Activated T-helper 1 cell treated with anti-CD3 and anti-CD28 coated beads, Interleukin-12 subunit alpha, Interleukin-12 subunit beta, Interleukin-2, Interleukin-4 antibody, amounts not matched to agents 30 ng/mL and 10 ng/mL and 1 ng/mL, durations not matched to agents 14 hours and 24 hours and 36 hours (primary cell): ENCODE measurements at regions of chr2 and their contacts with region 1.

Region 1: DNA sequence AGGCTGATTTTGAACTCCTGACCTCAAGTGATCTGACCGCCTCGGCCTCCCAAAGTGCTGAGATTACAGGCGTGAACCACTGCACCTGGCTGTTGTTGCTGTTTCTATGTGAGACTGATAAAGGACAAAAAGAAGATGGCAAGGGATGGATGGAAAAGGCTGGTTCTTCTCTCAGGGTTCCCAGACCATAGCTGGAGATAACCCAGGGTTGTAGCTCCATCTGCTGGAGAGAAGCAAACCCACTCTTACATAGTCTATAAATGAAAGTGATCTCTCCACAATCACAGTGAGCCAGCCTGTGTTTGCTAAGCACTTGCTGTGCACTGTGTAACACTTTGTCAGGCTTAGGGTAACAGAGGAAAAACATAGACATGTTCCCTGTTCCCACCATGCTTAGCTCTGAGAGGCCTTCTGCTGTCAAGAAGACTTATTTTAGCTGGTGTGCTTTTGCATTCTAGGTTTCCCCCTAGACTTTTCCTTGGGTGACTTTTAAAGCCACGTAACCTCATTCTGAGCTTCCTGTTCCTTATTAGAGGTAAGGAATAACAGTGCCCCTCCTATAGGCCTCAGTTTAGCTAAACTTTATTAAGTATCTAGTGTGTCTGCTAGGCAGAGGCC is 49.7 kb downstream of the LIMS1 start:
- DNase-seq: peak; percentile 28
- H3K4me3 Mint-ChIP-seq: no peak overlapping the region
- H3K27ac Mint-ChIP-seq: no peak overlapping the region
- H3K4me1 Mint-ChIP-seq: peaks cover 43% of the 10 kb centered on the region
- H3K27me3 Mint-ChIP-seq: no peaks in the 10 kb centered on the region

Region 2: DNA sequence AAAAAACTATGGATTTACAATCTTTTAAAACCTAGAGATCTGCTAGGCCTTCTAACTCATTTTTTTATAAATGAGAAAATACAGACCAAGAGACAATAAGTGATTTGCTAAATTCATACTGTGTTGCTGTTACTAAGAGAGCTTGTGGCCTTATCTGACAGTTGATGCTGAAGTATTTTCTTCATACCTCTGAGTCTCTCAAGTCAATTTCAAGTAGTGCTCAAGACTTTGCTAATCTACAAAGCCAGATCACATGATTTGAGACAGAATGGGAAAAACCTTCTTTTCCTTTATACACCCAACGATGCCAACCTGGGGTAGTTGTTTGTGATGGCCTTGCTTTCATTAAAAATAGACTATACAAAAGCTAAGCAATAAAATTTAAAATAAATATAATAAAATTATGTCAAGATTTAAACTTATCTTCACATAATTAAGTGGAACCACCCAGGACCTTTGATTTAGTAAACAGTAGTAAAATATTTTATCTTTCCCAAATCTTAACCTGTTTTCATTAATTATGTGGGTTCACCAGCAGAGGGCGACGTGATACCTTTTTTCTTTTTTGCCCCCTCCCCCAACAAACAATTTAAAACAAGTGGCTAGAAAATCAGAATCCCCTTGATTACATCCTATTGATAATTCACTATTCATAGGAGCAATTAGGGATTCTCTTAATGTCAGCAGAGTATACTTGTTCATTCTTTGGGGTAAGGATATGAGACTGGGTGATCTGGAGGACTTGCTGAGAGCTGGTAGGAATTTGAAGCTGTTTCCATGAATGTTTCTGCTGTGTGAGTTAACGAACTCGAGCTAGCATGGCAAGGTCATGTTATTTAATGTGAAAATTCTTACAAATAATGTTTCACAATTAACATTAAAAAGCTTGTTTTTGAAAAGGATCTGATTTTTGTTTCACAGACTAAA is 647.3 kb before region 1 on chr2:
- intact Hi-C with region 1: loop called (anchors 5 kb)
- DNase-seq: no peak
- H3K4me3 Mint-ChIP-seq: no peak overlapping the region
- H3K27ac Mint-ChIP-seq: no peak overlapping the region
- H3K4me1 Mint-ChIP-seq: no peaks in the 10 kb centered on the region
- H3K27me3 Mint-ChIP-seq: no peaks in the 10 kb centered on the region

Region 3: GRCh38 chr2:108194409-108195132 is 389.4 kb before region 1 on chr2:
- intact Hi-C with region 1: loop called (anchors 1 kb)
- DNase-seq: no peak
- H3K4me3 Mint-ChIP-seq: no peak overlapping the region
- H3K27ac Mint-ChIP-seq: no peak overlapping the region
- H3K4me1 Mint-ChIP-seq: no peaks in the 10 kb centered on the region
- H3K27me3 Mint-ChIP-seq: no peaks in the 10 kb centered on the region

Region 4: GRCh38 chr2:108396845-108397244 is 187.2 kb before region 1 on chr2:
- intact Hi-C with region 1: loop called (anchors 1 kb)
- DNase-seq: no peak
- H3K4me3 Mint-ChIP-seq: no peak overlapping the region
- H3K27ac Mint-ChIP-seq: no peak overlapping the region
- H3K4me1 Mint-ChIP-seq: no peaks in the 10 kb centered on the region
- H3K27me3 Mint-ChIP-seq: peaks cover 2% of the 10 kb centered on the region

Region 5: GRCh38 chr2:108448678-108449493 is 135.1 kb before region 1 on chr2 and contains the start of gene GCC2:
- intact Hi-C with region 1: loop called (anchors 1 kb)
- DNase-seq: peak; percentile 95
- H3K4me3 Mint-ChIP-seq: peak within 1 kb of the TSS; percentile 91
- H3K27ac Mint-ChIP-seq: peak within 1 kb of the TSS; percentile 85
- H3K4me1 Mint-ChIP-seq: peaks cover 44% of the 10 kb centered on the region
- H3K27me3 Mint-ChIP-seq: no peaks in the 10 kb centered on the region
- total RNA-seq, gene GCC2: 43.7 and 44.1 TPM in 2 replicates

Region 6: GRCh38 chr2:108533832-108534583 is 50.0 kb before region 1 on chr2 and contains the start of gene LIMS1:
- intact Hi-C with region 1: loop called (anchors 2 kb)
- DNase-seq: peak; percentile 76
- H3K4me3 Mint-ChIP-seq: peak within 1 kb of the TSS; percentile 96
- H3K27ac Mint-ChIP-seq: peak within 1 kb of the TSS; percentile 97
- H3K4me1 Mint-ChIP-seq: peaks cover 65% of the 10 kb centered on the region
- H3K27me3 Mint-ChIP-seq: peaks cover 2% of the 10 kb centered on the region
- total RNA-seq, gene LIMS1: 69.6 and 70.0 TPM in 2 replicates

Region 7: DNA sequence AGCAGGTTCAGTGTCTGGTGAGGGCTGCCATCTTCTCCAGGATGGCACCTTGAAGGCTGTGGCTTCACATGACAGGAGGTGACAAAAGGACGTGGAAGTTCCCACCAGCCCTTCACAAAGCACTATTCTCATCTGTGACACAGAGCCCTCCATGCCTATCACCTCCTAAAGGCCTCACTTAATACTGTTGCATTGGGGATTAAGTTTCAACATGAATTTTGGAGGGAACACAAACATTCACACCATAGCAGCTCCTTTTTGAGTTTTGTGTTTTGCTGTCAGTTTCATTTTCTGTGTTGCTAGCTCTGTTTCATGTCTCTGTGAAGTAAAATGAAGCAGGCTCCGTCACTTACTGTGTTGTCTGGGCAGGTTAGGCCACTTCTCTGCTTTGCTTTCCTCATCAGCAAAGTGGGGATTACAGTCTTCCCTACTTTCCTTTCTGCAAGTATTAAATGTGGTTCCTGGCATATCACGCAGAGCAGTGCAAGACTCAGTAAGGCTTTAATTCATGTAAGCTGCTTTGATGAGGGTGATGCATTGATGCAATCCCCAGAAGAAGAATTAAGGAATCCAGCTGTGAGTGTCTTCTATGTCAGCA is 18.1 kb before region 1 on chr2:
- intact Hi-C with region 1: no loop called
- DNase-seq: no peak
- H3K4me3 Mint-ChIP-seq: peak overlapping the region; percentile 37
- H3K27ac Mint-ChIP-seq: peak overlapping the region; percentile 65
- H3K4me1 Mint-ChIP-seq: peaks cover 21% of the 10 kb centered on the region
- H3K27me3 Mint-ChIP-seq: peaks cover 2% of the 10 kb centered on the region

Region 8: DNA sequence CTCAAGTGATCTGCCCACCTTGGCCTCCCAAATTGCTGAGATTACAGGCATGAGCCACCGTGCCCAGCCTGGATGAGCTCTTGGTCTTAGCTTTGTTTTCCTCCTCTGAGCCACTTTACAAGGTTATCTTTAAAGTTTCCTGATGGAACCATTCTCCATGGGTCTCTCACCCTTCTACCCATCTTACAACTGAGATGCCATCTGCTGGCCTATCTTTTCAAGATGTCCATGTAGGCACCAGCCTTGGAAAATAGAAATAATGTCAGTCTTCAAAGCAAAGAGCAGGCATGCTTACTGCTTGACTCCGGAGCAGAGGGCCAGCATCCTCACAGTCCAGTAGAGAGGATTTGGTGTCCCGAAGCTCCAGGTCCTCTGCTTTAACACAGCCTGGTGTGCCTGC is 906.0 kb after region 1 on chr2:
- intact Hi-C with region 1: no loop called
- DNase-seq: no peak
- H3K4me3 Mint-ChIP-seq: no peak overlapping the region
- H3K27ac Mint-ChIP-seq: no peak overlapping the region
- H3K4me1 Mint-ChIP-seq: no peaks in the 10 kb centered on the region
- H3K27me3 Mint-ChIP-seq: peaks cover 2% of the 10 kb centered on the region